A673 (cell line): ENCODE measurements at regions of chr14 and their contacts with region 1.

Region 1: DNA sequence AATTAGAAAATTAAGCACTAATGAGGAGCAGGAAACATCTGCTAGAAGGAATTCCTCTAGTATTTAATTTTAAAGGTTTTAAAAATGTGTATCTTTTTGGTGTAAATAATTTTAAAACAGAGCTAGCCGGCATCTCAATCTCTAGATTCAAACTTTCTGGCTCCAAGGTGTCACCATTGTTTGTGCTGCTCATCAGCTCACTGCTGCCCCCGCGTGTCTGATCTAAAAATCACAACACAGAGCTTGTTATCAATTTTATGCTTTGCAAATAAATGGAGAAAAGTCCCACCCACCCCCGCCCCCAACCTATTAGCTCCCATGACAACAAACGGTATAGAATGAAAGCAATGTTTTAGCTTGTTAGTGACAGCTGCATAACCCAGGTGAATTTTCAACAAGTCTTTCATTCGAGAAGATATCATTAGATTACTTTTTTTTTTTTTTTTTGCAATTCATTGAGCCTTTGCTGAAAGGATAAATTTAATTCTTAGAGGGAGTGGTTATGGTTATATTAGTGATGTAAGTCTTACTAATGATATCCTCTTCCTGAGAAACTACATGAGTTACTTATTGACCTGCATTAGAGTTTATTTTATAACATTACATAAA is 11.3 kb upstream of the ABHD12B start:
- DNase-seq: peak; percentile 91
- H3K4me3 ChIP-seq: peak overlapping the region; percentile 49
- H3K27ac ChIP-seq: peak overlapping the region; percentile 20
- H3K4me1 ChIP-seq: no peaks in the 10 kb centered on the region
- H3K27me3 ChIP-seq: no peaks in the 10 kb centered on the region
- CTCF ChIP-seq: peak; percentile 76

Region 2: DNA sequence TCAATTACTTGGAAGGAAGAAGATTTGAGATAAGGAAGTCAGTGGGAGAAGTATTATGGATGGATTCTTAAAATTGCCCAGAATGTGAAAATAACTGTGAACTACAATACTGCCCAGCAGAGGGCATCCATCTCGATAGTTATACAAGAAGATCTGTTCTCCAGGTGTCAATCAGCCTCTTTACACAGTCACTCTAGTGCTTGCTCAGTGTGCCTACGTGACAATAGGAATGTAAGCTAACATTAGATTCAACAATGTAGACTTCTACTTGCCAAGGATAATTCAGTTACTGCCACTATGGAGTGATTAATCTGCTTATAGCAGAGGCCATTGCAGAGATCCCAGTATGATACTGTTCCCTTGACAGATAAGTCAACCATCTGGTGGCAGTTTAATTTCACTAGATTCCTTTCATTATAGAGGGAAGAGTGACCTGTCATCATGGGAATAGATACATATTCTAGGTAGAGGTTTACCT is 317.6 kb before region 1 on chr14:
- CTCF ChIA-PET with region 1: no interaction called
- POLR2A ChIA-PET with region 1: no interaction called
- intact Hi-C with region 1: loop called (anchors 1 kb)
- DNase-seq: peak; percentile 67
- H3K4me3 ChIP-seq: no peak overlapping the region
- H3K27ac ChIP-seq: no peak overlapping the region
- H3K4me1 ChIP-seq: no peaks in the 10 kb centered on the region
- H3K27me3 ChIP-seq: no peaks in the 10 kb centered on the region
- CTCF ChIP-seq: peak; percentile 74

Region 3: DNA sequence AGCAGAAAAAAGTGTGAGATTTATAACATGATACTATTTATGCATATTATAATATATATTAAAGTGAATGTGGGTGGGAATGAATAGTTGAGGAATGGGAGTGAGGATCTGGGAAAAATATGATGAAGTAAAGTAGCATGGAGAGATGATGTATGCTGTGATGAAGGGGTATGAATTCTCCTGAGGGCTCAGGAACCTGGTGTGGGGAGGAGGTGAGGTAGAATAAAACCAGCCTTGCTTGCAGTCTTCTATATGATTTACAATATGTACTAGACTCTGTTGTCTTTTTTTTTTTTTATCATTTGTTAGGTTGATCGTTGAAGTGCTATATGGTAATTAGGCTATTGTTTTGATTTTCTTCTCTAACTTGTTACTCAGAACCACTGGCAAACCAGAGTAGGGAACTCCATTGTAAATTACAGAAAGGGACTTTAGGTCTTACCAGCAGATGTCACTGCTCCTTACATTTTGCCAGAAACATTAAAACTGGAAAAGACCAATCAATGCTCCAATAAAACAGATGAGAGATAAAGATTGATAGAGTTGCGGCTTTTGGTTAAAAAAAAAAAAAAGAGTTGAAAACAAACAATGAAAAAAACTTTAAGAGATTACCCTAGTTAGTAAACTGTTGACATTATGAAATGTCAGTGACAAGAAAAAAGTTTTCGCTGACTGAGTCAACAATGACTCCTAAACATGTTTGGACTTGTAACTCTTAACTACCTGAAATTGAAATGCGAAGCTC is 260.7 kb before region 1 on chr14:
- CTCF ChIA-PET with region 1: interaction called, 6 read pairs
- POLR2A ChIA-PET with region 1: no interaction called
- intact Hi-C with region 1: loop called (anchors 1 kb)
- DNase-seq: peak; percentile 68
- H3K4me3 ChIP-seq: no peak overlapping the region
- H3K27ac ChIP-seq: no peak overlapping the region
- H3K4me1 ChIP-seq: no peaks in the 10 kb centered on the region
- H3K27me3 ChIP-seq: no peaks in the 10 kb centered on the region
- CTCF ChIP-seq: peak; percentile 80

Region 4: DNA sequence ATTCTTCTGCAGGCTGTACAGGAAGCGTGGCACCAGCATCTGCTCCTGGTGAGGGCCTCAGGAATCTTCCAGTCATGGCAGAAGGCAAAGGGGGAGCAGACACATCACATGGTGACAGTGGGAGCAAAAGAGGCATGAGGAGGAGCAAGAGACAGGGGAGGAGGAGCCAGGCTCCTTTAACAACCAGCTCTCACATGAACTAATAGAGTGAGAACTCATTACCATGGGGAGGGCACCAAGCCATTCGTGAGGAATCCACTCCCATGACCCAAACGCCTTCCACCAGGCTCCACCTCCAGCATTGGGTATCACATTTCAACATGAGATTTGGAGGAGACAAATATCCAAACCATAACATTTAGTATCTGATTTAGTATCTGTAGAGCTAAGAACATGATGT is 249.1 kb after region 1 on chr14:
- CTCF ChIA-PET with region 1: no interaction called
- POLR2A ChIA-PET with region 1: interaction called, 11 read pairs
- intact Hi-C with region 1: no loop called
- DNase-seq: no peak
- H3K4me3 ChIP-seq: no peak overlapping the region
- H3K27ac ChIP-seq: no peak overlapping the region
- H3K4me1 ChIP-seq: no peaks in the 10 kb centered on the region
- H3K27me3 ChIP-seq: no peaks in the 10 kb centered on the region
- CTCF ChIP-seq: no peak